GM12878 (cell line): ENCODE measurements at regions of chr19 and their contacts with region 1.

Region 1: GRCh38 chr19:29873024-29873800 is 61.4 kb downstream of the CCNE1 start:
- DNase-seq: no peak
- ATAC-seq: peak; percentile 97
- H3K4me3 ChIP-seq: peak overlapping the region; percentile 73
- H3K27ac ChIP-seq: no peak overlapping the region
- H3K4me1 ChIP-seq: no peaks in the 10 kb centered on the region; the same call in 1 of the 2 replicates
- H3K27me3 ChIP-seq: no peaks in the 10 kb centered on the region; a peak in 1 of 4 replicates
- CTCF ChIP-seq: peak; percentile 65 to 74 (median 67); a peak in 5 of 6 replicates
- EP300 ChIP-seq: no peak
- POLR2A ChIP-seq: no peak
- RAD21 ChIP-seq: peak; percentile 82

Region 2: DNA sequence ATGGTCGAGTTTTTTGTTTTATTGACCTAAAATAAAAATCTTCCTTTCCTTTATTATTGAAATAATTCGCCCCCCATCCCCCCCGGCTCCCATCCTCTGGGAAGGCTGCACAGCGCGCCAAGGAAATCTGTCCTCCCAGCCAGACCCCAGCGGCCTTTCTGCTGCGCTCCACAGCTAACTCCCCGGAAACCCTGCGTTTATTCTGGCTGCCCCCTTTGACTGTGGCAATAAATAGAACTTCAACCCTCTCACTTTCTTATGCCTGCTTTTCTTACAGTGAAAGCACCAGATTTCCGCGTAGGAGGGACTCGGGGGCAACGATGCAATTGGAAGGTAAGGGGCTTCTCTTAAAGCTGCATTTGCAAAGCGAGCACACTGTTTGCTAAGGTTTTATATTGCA is 148.5 kb before region 1 on chr19:
- CTCF ChIA-PET with region 1: interaction called, 51 read pairs
- POLR2A ChIA-PET with region 1: no interaction called
- RAD21 ChIA-PET with region 1: interaction called, 19 read pairs
- SMC1A ChIA-PET with region 1: interaction called, 14 read pairs
- in situ Hi-C with region 1: no loop called
- intact Hi-C with region 1: no loop called
- DNase-seq: no peak
- ATAC-seq: no peak
- H3K4me3 ChIP-seq: no peak overlapping the region
- H3K27ac ChIP-seq: no peak overlapping the region
- H3K4me1 ChIP-seq: no peaks in the 10 kb centered on the region
- H3K27me3 ChIP-seq: peaks cover 0 to 2% of the 10 kb centered on the region in 2 experiments; a peak in 2 of 4 replicates
- CTCF ChIP-seq: no peak
- EP300 ChIP-seq: no peak
- POLR2A ChIP-seq: no peak
- RAD21 ChIP-seq: no peak

Region 3: GRCh38 chr19:29735800-29736199 is 137.4 kb before region 1 on chr19:
- CTCF ChIA-PET with region 1: interaction called, 51 read pairs
- POLR2A ChIA-PET with region 1: no interaction called
- RAD21 ChIA-PET with region 1: interaction called, 19 read pairs
- SMC1A ChIA-PET with region 1: interaction called, 14 read pairs
- in situ Hi-C with region 1: loop called (anchors 5 kb)
- intact Hi-C with region 1: loop called (anchors 1 kb)
- DNase-seq: no peak
- ATAC-seq: no peak
- H3K4me3 ChIP-seq: no peak overlapping the region
- H3K27ac ChIP-seq: no peak overlapping the region
- H3K4me1 ChIP-seq: no peaks in the 10 kb centered on the region
- H3K27me3 ChIP-seq: peaks cover 0 to 3% of the 10 kb centered on the region in 2 experiments; a peak in 2 of 4 replicates
- CTCF ChIP-seq: no peak
- EP300 ChIP-seq: no peak
- POLR2A ChIP-seq: no peak
- RAD21 ChIP-seq: no peak

Region 4: GRCh38 chr19:29761575-29762232 is 111.5 kb before region 1 on chr19:
- CTCF ChIA-PET with region 1: interaction called, 15 read pairs
- POLR2A ChIA-PET with region 1: no interaction called
- RAD21 ChIA-PET with region 1: interaction called, 14 read pairs
- SMC1A ChIA-PET with region 1: interaction called, 3 read pairs
- in situ Hi-C with region 1: no loop called
- intact Hi-C with region 1: loop called (anchors 2 kb)
- DNase-seq: no peak
- ATAC-seq: no peak
- H3K4me3 ChIP-seq: no peak overlapping the region
- H3K27ac ChIP-seq: no peak overlapping the region
- H3K4me1 ChIP-seq: no peaks in the 10 kb centered on the region
- H3K27me3 ChIP-seq: no peaks in the 10 kb centered on the region
- CTCF ChIP-seq: no peak
- EP300 ChIP-seq: no peak
- POLR2A ChIP-seq: no peak
- RAD21 ChIP-seq: no peak

Region 5: DNA sequence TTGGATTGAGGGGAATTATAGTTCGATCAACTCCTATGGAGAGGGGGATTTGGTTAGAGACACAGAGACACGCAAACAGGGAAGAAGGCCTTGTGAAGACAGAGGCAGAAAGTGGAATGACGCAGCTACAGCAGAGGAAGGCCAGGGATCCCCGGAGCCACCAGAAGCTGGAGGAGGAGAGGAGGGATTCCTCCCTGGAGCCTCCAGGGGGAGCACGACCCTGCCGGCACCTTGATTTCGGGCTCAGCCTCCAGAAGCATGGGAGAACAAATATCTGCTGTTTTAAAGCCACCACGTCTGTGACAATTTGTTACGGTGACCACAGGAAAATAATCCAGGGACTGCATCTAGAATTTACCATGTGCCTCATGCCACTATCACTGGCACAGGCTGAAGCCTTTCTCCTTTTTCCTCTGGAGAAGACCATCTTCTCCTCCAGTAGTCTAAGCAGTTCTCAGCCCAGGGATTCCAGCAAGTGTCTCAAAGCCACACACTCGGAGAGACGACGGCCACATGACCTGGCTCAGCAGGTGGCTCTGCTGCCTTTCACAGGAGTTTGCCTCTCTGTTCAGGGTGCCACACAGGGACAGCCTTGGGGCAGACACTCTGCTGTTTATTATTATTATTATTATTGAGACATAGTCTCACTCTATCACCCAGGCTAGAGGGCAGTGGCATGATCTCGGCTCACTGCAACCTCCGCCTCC is 101.4 kb before region 1 on chr19:
- CTCF ChIA-PET with region 1: interaction called, 5 read pairs
- POLR2A ChIA-PET with region 1: no interaction called
- RAD21 ChIA-PET with region 1: interaction called, 3 read pairs
- SMC1A ChIA-PET with region 1: no interaction called
- in situ Hi-C with region 1: loop called (anchors 5 kb)
- intact Hi-C with region 1: no loop called
- DNase-seq: no peak
- ATAC-seq: peak; percentile 67
- H3K4me3 ChIP-seq: no peak overlapping the region
- H3K27ac ChIP-seq: no peak overlapping the region
- H3K4me1 ChIP-seq: no peaks in the 10 kb centered on the region
- H3K27me3 ChIP-seq: no peaks in the 10 kb centered on the region
- CTCF ChIP-seq: peak; percentile 55 to 62 (median 59)
- EP300 ChIP-seq: no peak
- POLR2A ChIP-seq: no peak
- RAD21 ChIP-seq: peak; percentile 54

Region 6: DNA sequence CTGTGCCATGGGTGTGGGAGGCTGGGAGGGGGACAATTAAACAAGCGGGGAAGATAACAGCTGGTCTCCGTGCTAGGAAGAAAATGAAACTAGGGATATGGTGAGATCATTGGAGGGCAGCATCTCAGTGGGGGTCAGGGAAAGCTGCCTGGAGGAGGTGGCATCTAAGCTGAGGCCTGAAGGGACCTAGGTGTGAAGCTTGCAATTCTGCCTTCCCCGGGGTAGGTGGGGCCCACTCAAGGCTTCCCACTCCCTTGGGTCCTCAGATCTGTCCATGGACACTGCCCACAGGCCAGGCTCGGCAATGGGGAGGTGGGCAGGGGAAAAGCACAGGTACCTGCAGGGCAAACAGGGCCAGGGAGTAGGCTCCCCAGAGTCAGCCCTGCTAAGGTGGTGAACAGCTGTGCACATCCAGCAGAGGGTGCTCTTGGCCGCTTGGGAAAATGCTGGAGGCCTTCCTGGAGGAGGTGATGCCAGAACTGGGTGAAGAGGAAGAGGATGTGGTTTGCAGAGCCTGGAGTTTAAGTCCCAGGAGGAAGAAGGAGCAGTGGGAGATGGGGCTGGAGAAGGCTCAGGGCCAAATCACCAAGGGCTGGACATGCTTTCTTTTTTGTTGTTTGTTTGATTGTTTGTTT is 87.1 kb before region 1 on chr19:
- CTCF ChIA-PET with region 1: interaction called, 21 read pairs
- POLR2A ChIA-PET with region 1: no interaction called
- RAD21 ChIA-PET with region 1: interaction called, 9 read pairs
- SMC1A ChIA-PET with region 1: interaction called, 5 read pairs
- in situ Hi-C with region 1: no loop called
- intact Hi-C with region 1: no loop called
- DNase-seq: no peak
- ATAC-seq: peak; percentile 78
- H3K4me3 ChIP-seq: no peak overlapping the region
- H3K27ac ChIP-seq: no peak overlapping the region
- H3K4me1 ChIP-seq: no peaks in the 10 kb centered on the region
- H3K27me3 ChIP-seq: no peaks in the 10 kb centered on the region
- CTCF ChIP-seq: peak; percentile 43 to 55 (median 47)
- EP300 ChIP-seq: no peak
- POLR2A ChIP-seq: no peak
- RAD21 ChIP-seq: peak; percentile 56

Region 7: DNA sequence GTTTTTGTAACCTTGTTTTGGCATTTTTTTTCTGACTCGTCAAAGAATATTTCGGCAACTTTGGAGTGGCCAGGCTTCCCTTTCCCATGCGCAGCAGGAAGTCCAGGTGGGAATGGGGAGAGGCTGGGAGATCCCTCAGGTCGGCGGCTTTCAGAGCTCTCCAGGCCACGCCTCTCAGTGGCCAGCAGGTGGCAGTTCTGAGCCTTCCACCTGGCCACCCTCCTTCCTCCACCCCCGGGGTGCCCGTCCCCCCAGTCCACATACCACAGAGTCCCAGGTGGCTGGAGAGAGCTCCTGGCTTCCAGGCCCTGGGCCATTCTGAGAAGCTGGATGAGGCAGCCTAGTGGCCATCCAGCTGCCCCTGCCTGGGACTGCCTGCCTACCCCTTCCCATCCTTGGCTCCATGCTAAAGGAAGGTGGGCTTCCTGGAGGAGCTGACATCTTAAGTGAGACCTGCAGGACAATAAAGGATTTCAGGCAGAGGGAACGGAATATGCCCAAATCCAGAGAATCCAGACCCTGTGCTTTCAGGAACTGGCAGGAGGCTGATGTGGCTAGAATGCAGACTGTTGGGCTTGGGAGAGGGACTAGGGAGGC is 15.1 kb before region 1 on chr19:
- CTCF ChIA-PET with region 1: interaction called, 13 read pairs
- POLR2A ChIA-PET with region 1: no interaction called
- RAD21 ChIA-PET with region 1: interaction called, 3 read pairs
- SMC1A ChIA-PET with region 1: interaction called, 3 read pairs
- in situ Hi-C with region 1: no loop called
- intact Hi-C with region 1: no loop called
- DNase-seq: no peak
- ATAC-seq: peak; percentile 94
- H3K4me3 ChIP-seq: no peak overlapping the region
- H3K27ac ChIP-seq: no peak overlapping the region
- H3K4me1 ChIP-seq: peaks cover 3% of the 10 kb centered on the region
- H3K27me3 ChIP-seq: no peaks in the 10 kb centered on the region; a peak in 1 of 4 replicates
- CTCF ChIP-seq: peak; percentile 64 to 77 (median 71)
- EP300 ChIP-seq: no peak
- POLR2A ChIP-seq: no peak
- RAD21 ChIP-seq: peak; percentile 42

Region 8: DNA sequence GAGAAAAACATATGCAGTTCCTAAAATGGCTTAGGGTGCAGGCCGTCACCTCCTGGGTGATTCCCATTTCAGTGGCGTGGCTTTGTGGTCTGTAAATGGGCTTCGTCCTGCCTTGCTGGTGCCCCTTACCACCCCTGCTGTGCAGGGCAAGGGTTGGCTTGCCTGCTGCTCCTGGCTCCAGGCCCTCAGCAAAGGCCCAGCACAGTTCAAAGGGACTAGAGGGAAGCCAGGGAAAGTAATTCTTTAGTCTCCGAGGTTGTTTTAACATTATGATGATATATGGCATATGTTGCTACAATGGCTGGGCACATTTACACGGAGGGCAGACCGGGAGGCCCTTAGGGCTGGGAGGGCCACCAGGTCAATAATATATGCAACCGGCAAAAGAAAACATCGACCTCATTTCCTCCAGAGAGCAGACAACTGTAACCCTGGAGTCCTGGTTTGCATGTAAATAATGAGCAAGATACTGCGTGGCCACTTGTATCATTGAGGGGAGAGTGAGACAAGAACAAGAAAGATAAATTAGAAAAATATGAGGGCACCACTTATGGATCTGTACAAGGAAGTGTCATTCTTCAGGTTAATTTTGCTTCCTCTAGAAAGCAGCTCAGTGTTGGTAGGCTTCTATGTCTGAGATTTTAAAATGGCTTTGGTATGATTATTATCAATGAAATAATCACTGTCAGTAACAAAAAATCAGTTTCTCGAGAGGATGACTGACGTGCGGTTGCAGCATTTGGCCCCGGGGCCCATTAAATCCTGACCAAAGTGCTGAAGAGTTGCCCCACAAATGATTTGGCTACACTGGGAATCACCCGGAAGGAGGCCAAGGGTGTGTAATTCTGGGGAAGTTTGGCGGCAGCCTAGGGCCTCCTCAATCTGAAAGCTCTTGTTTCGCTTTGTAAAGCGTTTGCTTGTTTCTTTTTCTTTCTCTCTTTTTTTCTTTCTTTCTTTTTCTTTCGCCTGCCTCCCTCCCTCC is 36.0 kb after region 1 on chr19:
- CTCF ChIA-PET with region 1: no interaction called
- POLR2A ChIA-PET with region 1: no interaction called
- RAD21 ChIA-PET with region 1: no interaction called
- SMC1A ChIA-PET with region 1: no interaction called
- in situ Hi-C with region 1: no loop called
- intact Hi-C with region 1: no loop called
- DNase-seq: no peak
- ATAC-seq: no peak
- H3K4me3 ChIP-seq: no peak overlapping the region
- H3K27ac ChIP-seq: no peak overlapping the region
- H3K4me1 ChIP-seq: no peaks in the 10 kb centered on the region
- H3K27me3 ChIP-seq: no peaks in the 10 kb centered on the region
- CTCF ChIP-seq: no peak
- EP300 ChIP-seq: no peak
- POLR2A ChIP-seq: no peak
- RAD21 ChIP-seq: no peak